GM13976 (cell line): ENCODE measurements at regions of chr17 and their contacts with region 1.

Region 1: GRCh38 chr17:76188213-76189015 is 47.4 kb upstream of the FOXJ1 start:
- DNase-seq: no peak
- CTCF ChIP-seq: no peak

Region 2: DNA sequence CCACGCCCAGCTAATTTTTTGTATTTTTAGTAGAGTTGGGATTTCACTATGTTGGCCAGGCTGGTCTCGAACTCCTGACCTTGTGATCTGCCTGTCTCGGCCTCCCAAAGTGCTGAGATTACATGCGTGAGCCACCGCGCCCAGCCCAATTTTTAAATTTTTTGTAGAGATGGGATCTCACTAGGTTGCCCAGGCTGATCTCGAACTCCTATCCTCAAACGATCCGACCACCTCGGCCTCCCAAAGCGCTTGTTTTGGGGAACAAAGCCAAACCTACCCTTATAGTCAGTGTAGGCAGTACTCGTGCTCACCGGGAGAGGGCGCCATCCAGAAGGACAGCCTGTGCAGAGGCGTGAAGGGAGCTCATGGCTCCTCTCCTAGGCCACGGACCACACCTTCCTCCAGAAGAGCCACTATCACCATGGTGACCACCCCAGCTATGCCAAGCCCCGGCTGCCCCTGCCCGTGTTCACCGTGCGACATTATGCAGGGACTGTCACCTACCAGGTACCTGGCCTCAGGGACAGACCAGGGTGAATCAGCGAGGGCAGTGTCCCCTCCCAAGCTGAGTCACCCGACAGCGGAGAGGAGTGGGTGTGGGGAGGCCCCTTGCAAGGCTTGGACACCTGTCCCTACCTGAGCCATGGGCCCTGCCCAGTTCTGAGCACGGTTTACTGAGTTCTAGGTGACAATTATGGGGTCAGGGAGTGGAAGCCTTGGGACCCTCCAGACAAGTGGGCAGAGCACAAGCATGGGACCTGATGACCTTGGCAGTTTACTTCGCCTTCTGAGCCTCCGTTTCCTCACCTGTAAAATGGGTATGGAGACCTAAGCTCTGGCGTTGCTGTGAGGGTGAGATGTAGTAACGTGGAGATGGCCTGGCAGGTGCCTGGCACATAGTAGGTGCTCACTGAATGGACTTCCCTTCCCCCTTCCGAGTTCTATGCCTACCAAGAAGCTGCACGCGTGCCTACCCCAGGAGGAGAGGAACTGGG is 587.1 kb before region 1 on chr17:
- in situ Hi-C with region 1: no loop called
- DNase-seq: peak; percentile 86
- CTCF ChIP-seq: peak; percentile 88

Region 3: GRCh38 chr17:76121932-76122430 is 66.4 kb before region 1 on chr17:
- in situ Hi-C with region 1: no loop called
- DNase-seq: peak; percentile 61
- CTCF ChIP-seq: no peak

Region 4: DNA sequence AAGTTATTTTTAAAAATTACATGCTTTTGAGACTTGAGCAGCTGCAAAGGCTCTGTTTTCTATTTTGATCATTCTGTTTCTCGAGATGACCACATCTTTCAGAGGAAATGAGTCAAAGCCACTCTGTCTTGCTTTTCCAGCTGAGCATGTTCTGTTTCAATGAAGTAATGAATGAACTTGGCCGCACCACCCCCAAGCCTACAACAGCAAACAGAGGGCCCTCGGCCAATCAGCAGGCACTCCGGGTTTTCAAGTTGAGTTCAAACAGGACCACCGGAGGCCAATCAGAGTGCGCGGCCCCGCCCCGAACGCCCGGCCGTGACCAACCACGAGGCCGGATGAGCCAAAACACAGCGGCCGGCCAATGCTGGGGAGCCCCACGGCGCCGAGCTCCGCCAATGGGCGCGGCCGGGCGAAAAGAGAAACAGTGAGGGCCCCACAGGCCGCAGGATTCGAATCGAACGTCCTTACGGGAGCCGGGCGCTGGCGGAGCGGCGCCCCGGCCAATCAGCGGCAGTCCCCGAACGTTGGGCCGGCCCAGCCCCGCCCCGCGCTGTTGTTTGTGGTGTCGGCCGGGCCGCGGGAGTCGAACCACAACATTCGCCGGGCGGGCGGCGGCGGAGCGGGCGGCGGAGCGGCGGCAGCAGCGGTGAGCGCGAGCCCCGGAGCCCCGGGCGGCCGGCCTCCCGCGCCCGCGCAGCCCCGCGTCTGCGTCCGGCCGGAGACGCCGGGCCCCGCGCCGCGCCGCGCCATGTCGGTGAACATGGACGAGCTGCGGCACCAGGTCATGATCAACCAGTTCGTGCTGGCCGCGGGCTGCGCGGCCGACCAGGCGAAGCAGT is 76.6 kb after region 1 on chr17 and contains the start of gene UBALD2:
- in situ Hi-C with region 1: loop called (anchors 5 kb)
- DNase-seq: peak; percentile 94
- CTCF ChIP-seq: no peak